AG04450 (cell line): ENCODE measurements at regions of chr11 and their contacts with region 1.

Region 1: GRCh38 chr11:132072044-132072857 is 701.8 kb downstream of the NTM start:
- DNase-seq: peak; percentile 89
- H3K4me3 ChIP-seq: no peak overlapping the region; the same call in 1 of the 2 replicates
- H3K27ac ChIP-seq: peak overlapping the region; percentile 99
- H3K27me3 ChIP-seq: no peaks in the 10 kb centered on the region
- CTCF ChIP-seq: no peak

Region 2: GRCh38 chr11:132114185-132114584 is 41.9 kb after region 1 on chr11:
- CTCF ChIA-PET with region 1: interaction called, 3 read pairs
- POLR2A ChIA-PET with region 1: interaction called, 14 read pairs
- DNase-seq: no peak
- H3K4me3 ChIP-seq: no peak overlapping the region
- H3K27ac ChIP-seq: no peak overlapping the region
- H3K27me3 ChIP-seq: no peaks in the 10 kb centered on the region
- CTCF ChIP-seq: peak; percentile 37; the same call in 1 of the 2 replicates